HEK293T (cell line): ENCODE measurements at regions of chr6 and their contacts with region 1.

Region 1: DNA sequence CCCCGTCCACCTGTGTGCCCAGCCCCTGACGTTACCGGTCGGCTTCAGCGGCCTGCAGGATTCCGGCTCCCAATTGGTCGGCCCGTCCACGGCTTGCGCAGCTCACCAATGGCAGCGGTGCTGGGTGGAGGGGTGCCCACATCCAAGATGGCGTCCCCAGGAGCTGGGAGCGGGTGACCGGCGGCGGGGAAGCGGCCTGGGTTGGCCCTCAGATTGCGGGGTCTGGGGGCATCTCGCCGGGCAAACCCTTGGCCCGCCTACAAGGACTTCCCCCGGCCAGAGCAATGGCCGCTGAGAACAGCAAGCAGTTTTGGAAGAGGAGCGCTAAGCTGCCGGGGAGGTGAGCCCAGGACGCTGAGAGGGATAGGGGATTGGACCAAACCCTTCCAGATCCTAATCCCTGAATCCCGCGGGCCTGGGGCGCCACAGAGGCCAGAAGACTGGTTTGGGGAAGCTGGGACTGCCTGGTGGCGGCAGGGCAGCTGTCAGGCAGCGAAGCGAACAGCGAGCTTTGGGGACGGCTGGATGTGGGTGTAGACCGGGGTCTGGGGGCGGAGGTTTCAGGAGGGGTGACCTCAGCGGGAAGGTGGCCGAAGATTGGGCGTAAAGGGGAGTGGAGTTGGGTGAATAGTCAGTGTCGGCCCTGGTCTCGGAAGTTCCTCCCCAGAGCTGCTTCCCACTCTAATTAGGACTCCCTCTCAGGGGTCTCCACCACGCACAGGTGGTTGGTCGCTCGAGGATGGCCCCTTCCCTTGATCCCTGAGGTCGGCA is at the starts of genes TBC1D22B and TMEM217:
- DNase-seq: peak; percentile 99

Region 2: GRCh38 chr6:35452186-35453090 is 1805.4 kb before region 1 on chr6 and contains the start of gene FANCE:
- CTCF ChIA-PET with region 1: no interaction called
- POLR2A ChIA-PET with region 1: no interaction called
- DNase-seq: peak; percentile 95

Region 3: DNA sequence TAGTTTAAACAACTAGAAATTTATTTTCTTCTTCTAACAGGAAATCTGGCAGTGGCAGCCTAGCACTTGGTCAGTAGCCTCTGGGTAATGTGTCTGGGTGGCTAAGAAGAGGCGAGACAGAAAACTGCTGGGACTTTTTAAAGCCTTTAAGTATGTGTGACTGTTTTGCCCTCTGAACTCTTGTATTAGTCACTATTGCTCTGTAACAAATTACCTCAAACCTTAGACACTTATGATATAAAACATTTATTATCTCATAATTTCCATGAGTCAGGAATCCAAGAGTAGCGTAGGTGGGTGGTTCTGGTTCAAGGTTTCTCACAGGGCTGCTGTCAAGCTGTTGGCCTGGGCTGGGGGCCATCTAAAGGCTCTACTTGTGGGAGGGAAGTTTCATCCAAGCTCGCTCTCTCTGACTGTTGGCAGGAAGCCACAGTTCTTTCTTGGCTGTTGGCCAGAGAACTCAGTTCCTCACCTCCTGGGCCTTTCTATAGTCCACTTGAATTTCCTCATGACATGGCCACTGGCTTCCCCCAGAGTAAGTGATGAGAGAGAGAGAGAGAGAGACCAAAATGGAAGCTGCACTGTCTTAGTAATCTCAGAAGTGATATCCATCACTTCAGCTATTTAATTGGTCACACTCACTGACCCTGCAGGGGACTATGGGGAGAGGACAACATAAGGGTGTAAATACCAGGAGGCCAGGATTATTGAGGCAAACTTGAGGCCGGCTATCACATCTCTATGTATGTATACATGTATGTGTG is 17.7 kb before region 1 on chr6:
- CTCF ChIA-PET with region 1: no interaction called
- POLR2A ChIA-PET with region 1: interaction called, 14 read pairs
- DNase-seq: peak; percentile 52

Region 4: DNA sequence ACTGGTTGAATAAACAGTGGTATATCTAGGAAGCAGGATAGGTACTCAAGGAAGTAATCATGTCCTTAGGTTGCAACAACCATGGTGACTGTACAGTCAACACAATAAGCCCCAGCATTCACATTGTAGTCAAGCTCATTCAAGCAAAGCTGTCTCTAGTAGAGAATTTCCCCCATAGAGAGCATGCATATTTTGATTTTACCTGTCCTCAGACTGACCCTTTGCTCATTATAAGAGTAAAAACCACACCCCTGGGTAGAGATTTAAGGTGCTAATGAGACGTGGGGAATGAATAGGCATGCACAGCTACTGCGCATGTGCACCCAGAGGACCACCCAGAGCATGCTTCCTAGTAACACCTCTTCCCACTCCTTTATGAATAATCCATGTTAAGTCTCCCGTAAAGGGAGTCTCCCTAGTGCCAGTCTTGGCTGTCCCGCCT is 89.9 kb after region 1 on chr6:
- CTCF ChIA-PET with region 1: no interaction called
- POLR2A ChIA-PET with region 1: no interaction called
- DNase-seq: no peak

Region 5: GRCh38 chr6:37538107-37538506 is 280.3 kb after region 1 on chr6:
- CTCF ChIA-PET with region 1: no interaction called
- POLR2A ChIA-PET with region 1: no interaction called
- DNase-seq: peak; percentile 67